ENCODE measurements at regions of chr3 and their contacts with region 1.

Region 1: DNA sequence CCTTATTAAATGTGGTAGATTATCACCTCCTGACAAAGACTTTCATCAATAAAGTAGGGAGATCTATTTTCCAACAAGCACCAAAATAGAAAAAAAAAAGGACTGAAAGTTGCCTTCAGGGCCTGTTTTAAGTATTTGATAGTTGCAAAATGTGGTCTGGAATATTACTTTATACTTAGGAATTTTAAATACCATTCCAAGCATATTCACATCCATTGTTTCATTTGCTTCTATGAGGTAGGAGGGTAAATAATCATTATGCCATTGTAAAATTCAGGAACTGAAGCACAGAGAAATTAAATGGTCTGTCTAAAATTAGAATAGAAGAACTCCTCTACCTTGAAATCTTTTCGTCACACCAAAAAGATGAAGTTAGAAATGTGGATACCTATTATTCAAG is 110.0 kb downstream of the TMCC1 start:
- DNase-seq: no peak
- ATAC-seq: no peak
- H3K4me3 ChIP-seq: no peak overlapping the region
- H3K4me3 Mint-ChIP-seq: no peak overlapping the region
- H3K27ac ChIP-seq: no peak overlapping the region
- H3K27ac Mint-ChIP-seq: no peak overlapping the region
- H3K4me1 ChIP-seq: no peaks in the 10 kb centered on the region
- H3K4me1 Mint-ChIP-seq: peaks cover 0 to 1% (median 0%) of the 10 kb centered on the region in 3 donors
- H3K27me3 ChIP-seq: no peaks in the 10 kb centered on the region
- H3K27me3 Mint-ChIP-seq: no peaks in the 10 kb centered on the region

Region 2: DNA sequence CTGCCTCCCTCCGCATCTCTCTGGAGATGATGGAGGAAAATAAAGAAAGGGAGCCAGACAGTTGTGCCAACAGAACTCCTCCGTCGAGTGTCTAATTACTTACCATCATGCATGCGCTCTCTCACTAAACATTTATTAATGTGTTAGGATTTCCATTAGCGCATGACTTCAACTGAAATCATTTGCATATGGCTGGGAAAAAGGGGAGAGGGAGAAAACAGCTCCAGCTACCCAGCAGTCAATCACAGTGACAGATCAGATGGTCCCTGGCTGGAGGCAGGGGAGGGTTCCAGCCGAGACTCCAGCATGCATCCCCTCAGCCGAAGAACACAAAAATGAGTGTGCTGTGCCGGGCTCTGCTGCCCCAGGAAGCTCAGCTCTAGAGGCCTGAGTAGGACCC is 261.9 kb before region 1 on chr3:
- CTCF ChIA-PET with region 1: no interaction called
- POLR2A ChIA-PET with region 1: no interaction called
- DNase-seq: no peak
- ATAC-seq: no peak
- H3K4me3 ChIP-seq: no peak overlapping the region
- H3K4me3 Mint-ChIP-seq: no peak overlapping the region
- H3K27ac ChIP-seq: no peak overlapping the region
- H3K27ac Mint-ChIP-seq: no peak overlapping the region
- H3K4me1 ChIP-seq: no peaks in the 10 kb centered on the region
- H3K4me1 Mint-ChIP-seq: no peaks in the 10 kb centered on the region
- H3K27me3 ChIP-seq: no peaks in the 10 kb centered on the region
- H3K27me3 Mint-ChIP-seq: no peaks in the 10 kb centered on the region

Region 3: DNA sequence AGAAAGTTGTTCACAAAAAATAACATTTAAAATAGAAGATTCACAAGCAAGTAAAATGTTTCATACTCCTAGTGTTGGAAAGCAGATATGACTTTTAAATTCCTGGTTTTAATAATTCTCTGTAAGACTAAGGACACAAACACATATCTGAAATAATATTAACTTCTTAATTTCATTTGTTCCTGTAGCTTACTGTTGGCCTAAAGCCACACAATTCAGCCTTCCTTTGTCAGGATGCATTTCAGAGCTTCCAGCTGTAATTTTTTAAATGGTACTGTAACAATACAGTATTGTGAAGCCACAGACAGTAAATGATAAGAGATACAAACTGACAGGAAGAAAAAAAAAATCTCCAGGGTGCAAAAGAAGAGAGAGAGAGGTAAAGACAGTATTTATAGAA is 25.8 kb after region 1 on chr3:
- CTCF ChIA-PET with region 1: no interaction called
- POLR2A ChIA-PET with region 1: no interaction called
- DNase-seq: no peak
- ATAC-seq: no peak
- H3K4me3 ChIP-seq: no peak overlapping the region
- H3K4me3 Mint-ChIP-seq: no peak overlapping the region
- H3K27ac ChIP-seq: no peak overlapping the region
- H3K27ac Mint-ChIP-seq: no peak overlapping the region
- H3K4me1 ChIP-seq: no peaks in the 10 kb centered on the region
- H3K4me1 Mint-ChIP-seq: peaks cover 21 to 36% (median 33%) of the 10 kb centered on the region in 3 donors
- H3K27me3 ChIP-seq: no peaks in the 10 kb centered on the region
- H3K27me3 Mint-ChIP-seq: no peaks in the 10 kb centered on the region

Region 4: DNA sequence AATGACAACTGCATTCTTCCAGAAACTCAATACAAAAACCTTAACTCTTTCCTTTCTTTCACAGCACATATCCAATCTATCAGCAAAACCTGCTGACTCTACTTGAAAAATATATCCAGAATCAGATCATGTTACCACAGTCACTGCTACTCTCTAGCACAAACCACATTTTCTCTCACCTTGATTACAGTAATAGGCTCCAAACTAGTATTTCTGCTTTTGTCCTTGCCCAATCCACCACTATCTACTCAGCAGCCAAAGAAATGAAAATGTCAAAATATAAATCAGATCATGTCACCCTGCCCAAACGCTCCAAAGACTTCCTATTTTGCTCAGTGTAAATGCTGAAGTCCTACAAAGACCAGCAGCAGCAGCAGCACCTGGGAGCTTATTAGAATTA is 94.9 kb after region 1 on chr3:
- CTCF ChIA-PET with region 1: no interaction called
- POLR2A ChIA-PET with region 1: interaction called in 1 of 2 experiments, 13 read pairs
- DNase-seq: no peak
- ATAC-seq: no peak
- H3K4me3 ChIP-seq: no peak overlapping the region
- H3K4me3 Mint-ChIP-seq: no peak overlapping the region
- H3K27ac ChIP-seq: no peak overlapping the region
- H3K27ac Mint-ChIP-seq: no peak overlapping the region
- H3K4me1 ChIP-seq: no peaks in the 10 kb centered on the region
- H3K4me1 Mint-ChIP-seq: peaks cover 20 to 29% (median 23%) of the 10 kb centered on the region in 3 donors
- H3K27me3 ChIP-seq: no peaks in the 10 kb centered on the region
- H3K27me3 Mint-ChIP-seq: no peaks in the 10 kb centered on the region